Cardiac septum (tissue), 1 donor: ENCODE measurements at regions of chr11 and their contacts with region 1.

Region 1: GRCh38 chr11:7098235-7098832 is 9.5 kb downstream of the RBMXL2 start:
- DNase-seq: no peak

Region 2: GRCh38 chr11:6693342-6694228 is 404.7 kb before region 1 on chr11:
- intact Hi-C with region 1: no loop called
- DNase-seq: no peak

Region 3: DNA sequence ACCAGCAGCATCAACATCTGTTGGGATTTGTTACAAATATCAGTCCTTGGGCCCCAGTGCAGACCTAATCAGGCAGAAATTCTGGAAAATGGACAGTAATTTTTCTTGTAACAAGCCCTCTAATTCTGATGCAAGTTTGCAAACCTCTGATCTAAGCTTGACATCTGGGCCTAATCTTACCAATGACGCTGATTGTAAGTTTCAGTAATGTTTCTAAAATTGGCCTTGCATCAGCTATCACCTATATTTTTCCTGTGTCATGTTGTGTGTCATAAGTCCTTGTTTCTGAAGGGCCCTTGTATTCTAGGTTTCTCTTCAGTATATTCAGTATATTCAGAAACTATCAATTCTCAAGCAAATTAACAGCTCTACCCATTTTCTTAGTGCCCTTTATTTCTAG is 135.7 kb before region 1 on chr11:
- intact Hi-C with region 1: no loop called
- DNase-seq: no peak

Region 4: DNA sequence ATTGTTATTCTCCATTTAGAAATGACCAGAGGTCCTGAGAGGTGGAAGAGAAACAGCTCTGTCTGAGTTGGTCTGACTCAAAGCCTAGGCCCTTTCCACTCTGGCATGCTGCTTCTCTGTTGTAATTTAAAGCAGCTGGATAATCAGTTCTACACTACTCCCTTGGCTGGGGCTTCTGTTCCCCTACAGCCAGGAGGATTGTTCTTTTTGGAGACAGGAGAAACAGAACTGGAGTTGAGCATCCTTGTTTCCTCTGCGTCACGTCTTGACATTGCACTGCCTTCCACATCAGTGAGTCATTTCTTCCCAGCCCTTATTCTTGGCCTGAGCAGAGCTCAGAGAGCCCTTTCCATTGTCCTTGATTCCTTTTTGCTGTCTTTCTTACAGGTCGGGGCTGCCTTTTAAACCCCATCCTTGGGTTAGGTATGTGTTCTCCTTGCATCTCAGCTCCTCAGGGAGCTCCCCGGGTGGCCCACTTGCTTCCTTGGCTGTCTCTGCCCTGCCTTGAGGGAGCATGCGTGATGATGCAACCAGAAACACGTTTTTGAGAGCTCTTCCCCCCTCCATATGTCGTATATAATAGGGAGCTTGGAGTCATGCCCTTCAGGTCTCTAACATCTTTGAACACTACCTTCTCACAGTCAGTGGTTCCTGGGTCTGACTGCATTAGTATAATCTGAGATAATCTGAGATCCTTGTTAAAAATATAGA is 539.3 kb after region 1 on chr11:
- intact Hi-C with region 1: no loop called
- DNase-seq: no peak

Region 5: GRCh38 chr11:7688238-7688826 is 590.0 kb after region 1 on chr11:
- intact Hi-C with region 1: loop called (anchors 10 kb)
- DNase-seq: no peak

Region 6: DNA sequence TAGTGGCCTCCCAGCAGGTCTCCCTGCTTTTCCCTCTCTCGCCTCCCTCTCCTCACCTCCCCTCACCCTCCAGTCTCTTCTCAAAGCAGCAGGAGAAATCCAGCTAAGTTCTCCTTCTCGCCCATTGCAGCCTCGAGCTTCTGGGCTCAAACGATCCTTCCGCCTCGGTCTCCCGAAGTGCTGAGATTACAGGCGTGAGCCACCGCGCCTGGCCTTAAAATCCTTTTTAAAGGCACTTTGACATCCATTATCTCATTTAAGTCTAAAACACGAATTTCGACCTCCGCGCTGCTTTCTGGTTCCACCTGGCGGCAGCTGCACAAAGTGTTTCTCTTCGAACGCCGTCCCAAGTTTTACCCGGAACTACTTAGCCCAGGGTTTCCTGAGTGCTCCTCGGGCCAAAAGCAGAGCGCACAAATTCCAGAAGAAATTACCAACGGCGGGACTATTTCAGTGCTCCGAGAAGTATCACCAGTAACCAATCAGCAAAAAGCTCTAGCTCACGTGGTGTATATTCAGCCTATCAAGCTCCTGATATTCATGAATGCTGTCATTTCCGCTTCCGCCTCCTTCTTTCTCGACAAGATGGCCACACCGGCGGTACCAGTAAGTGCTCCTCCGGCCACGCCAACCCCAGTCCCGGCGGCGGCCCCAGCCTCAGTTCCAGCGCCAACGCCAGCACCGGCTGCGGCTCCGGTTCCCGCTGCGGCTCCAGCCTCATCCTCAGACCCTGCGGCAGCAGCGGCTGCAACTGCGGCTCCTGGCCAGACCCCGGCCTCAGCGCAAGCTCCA is 888.6 kb after region 1 on chr11 and contains the start of gene EIF3F:
- intact Hi-C with region 1: loop called (anchors 5 kb)
- DNase-seq: peak; percentile 92
- total RNA-seq, gene EIF3F: 123 TPM